ENCODE measurements at regions of chr18 and their contacts with region 1.

Region 1: GRCh38 chr18:3995476-3996102 is 459.5 kb downstream of the DLGAP1 start:
- DNase-seq: peak; percentile 27
- H3K4me3 ChIP-seq: no peak overlapping the region
- H3K27ac ChIP-seq: no peak overlapping the region
- H3K4me1 ChIP-seq: no peaks in the 10 kb centered on the region
- H3K27me3 ChIP-seq: peaks cover 7% of the 10 kb centered on the region; the same call in 1 of the 2 replicates
- CTCF ChIP-seq: peak; percentile 90
- EP300 ChIP-seq: no peak
- RAD21 ChIP-seq: peak; percentile 59

Region 2: GRCh38 chr18:3771121-3771971 is 224.2 kb before region 1 on chr18:
- CTCF ChIA-PET with region 1: interaction called, 40 read pairs
- POLR2A ChIA-PET with region 1: no interaction called
- DNase-seq: peak; percentile 86
- H3K4me3 ChIP-seq: peak overlapping the region; percentile 26 to 46
- H3K27ac ChIP-seq: no peak overlapping the region
- H3K4me1 ChIP-seq: peaks cover 0 to 4% of the 10 kb centered on the region in 2 experiments; a peak in 2 of 4 replicates
- H3K27me3 ChIP-seq: peaks cover 26% of the 10 kb centered on the region; the same call in 1 of the 2 replicates
- CTCF ChIP-seq: peak; percentile 89
- EP300 ChIP-seq: no peak; a peak in 1 of 4 replicates
- RAD21 ChIP-seq: peak; percentile 71

Region 3: GRCh38 chr18:3966985-3967856 is 28.4 kb before region 1 on chr18:
- CTCF ChIA-PET with region 1: interaction called, 10 read pairs
- POLR2A ChIA-PET with region 1: no interaction called
- DNase-seq: no peak
- H3K4me3 ChIP-seq: 0 out of 4 replicates have a peak overlapping the region, but pooled peaks of 1 of the 2 experiments have one; percentile 2
- H3K27ac ChIP-seq: no peak overlapping the region
- H3K4me1 ChIP-seq: peaks cover 0 to 11% of the 10 kb centered on the region in 2 experiments; a peak in 1 of 4 replicates
- H3K27me3 ChIP-seq: no peaks in the 10 kb centered on the region; the same call in 1 of the 2 replicates
- CTCF ChIP-seq: no peak
- EP300 ChIP-seq: 0 out of 4 replicates have a peak, but pooled peaks of 1 of the 2 experiments have one; percentile 11
- RAD21 ChIP-seq: no peak

Region 4: GRCh38 chr18:3983351-3983969 is 12.1 kb before region 1 on chr18:
- CTCF ChIA-PET with region 1: interaction called, 13 read pairs
- POLR2A ChIA-PET with region 1: no interaction called
- DNase-seq: no peak
- H3K4me3 ChIP-seq: no peak overlapping the region
- H3K27ac ChIP-seq: no peak overlapping the region
- H3K4me1 ChIP-seq: peaks cover 0 to 14% of the 10 kb centered on the region in 2 experiments; a peak in 1 of 4 replicates
- H3K27me3 ChIP-seq: no peaks in the 10 kb centered on the region; the same call in 1 of the 2 replicates
- CTCF ChIP-seq: no peak
- EP300 ChIP-seq: no peak
- RAD21 ChIP-seq: no peak

Region 5: GRCh38 chr18:4016491-4016984 is 20.9 kb after region 1 on chr18:
- CTCF ChIA-PET with region 1: interaction called, 15 read pairs
- POLR2A ChIA-PET with region 1: no interaction called
- DNase-seq: no peak
- H3K4me3 ChIP-seq: no peak overlapping the region
- H3K27ac ChIP-seq: no peak overlapping the region
- H3K4me1 ChIP-seq: no peaks in the 10 kb centered on the region
- H3K27me3 ChIP-seq: no peaks in the 10 kb centered on the region; the same call in 1 of the 2 replicates
- CTCF ChIP-seq: no peak
- EP300 ChIP-seq: no peak
- RAD21 ChIP-seq: no peak

Measured in SK-N-SH (cell line).